Lower leg skin (tissue), 4 donors: ENCODE measurements at regions of chr5 and their contacts with region 1.

Region 1: DNA sequence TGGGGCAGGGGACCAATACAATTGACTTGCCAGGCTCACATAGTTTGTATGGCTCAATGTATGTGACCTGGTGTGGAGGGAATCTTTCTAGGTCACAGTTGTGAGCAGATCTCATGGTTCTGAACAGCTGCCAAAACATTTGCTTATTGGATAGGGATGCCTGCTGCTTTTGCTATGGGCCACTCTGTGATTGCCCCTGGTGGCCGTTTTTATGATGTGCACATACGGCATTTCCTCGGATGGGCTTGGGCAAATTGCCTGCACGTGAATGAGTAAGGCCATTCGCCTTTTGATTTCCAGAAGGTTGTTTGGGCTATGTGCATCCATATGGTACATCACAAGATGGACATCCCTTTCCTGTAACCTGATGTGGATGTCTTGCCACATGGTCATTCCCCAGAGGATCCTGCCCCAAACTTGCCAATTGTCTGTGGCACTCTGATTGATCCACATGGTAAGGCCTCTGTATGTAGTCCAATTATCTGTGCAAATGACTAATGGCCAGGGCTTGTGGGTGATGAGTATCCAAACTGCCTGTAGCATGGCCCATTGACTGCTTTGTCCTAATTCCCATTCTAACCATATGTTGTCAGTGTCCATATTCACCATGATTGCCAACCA is 10.7 kb upstream of the SLC22A4 start:
- DNase-seq: peak in 1 of 2 donors; percentile 72
- H3K4me3 ChIP-seq: no peak overlapping the region
- CTCF ChIP-seq: no peak
- POLR2A ChIP-seq: no peak

Region 2: GRCh38 chr5:133754575-133755169 is 1471.1 kb after region 1 on chr5:
- intact Hi-C with region 1: loop called (anchors 5 kb)
- DNase-seq: no peak
- H3K4me3 ChIP-seq: no peak overlapping the region
- CTCF ChIP-seq: no peak
- POLR2A ChIP-seq: no peak